ENCODE measurements at regions of chr4 and their contacts with region 1.

Region 1: GRCh38 chr4:2441393-2442174 is 22.8 kb downstream of the CFAP99 start:
- DNase-seq: peak; percentile 88
- H3K4me3 ChIP-seq: no peak overlapping the region
- H3K27ac ChIP-seq: no peak overlapping the region
- H3K4me1 ChIP-seq: no peaks in the 10 kb centered on the region
- H3K27me3 ChIP-seq: no peaks in the 10 kb centered on the region
- CTCF ChIP-seq: peak; percentile 98

Region 2: DNA sequence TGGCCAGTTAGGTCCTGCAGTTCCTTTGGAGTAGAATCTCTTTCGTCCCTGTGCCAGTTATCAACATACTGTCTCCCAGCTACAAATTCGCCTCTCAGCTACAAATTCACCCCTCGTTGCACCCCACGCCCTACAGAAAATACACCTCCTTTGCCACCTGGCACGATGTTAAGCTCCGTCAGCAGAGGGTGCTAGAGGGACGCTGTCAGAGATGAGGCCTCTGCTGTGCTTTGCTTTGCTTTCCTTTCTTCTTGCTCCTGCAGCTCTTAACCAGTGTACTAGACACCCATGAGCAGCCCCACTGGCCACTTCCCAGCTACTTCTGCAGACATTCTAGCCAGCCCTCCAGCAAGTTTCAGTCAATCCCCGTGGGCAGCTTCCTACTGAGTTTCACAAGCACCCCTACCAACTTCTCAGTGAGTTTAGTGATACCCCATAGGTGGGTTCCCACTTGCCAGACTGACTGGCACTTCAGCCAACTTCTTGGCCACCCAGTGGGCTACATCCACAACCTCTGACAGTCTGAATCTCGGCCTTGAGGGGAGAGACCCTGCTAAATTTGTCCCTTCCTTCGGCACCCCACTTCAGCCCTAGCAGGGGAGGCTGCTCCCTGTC is 221.5 kb before region 1 on chr4:
- CTCF ChIA-PET with region 1: interaction called, 13 read pairs
- POLR2A ChIA-PET with region 1: no interaction called
- intact Hi-C with region 1: loop called (anchors 1 kb)
- DNase-seq: peak; percentile 75
- H3K4me3 ChIP-seq: no peak overlapping the region
- H3K27ac ChIP-seq: no peak overlapping the region
- H3K4me1 ChIP-seq: no peaks in the 10 kb centered on the region
- H3K27me3 ChIP-seq: no peaks in the 10 kb centered on the region
- CTCF ChIP-seq: peak; percentile 91

Region 3: GRCh38 chr4:2290974-2291704 is 150.4 kb before region 1 on chr4:
- CTCF ChIA-PET with region 1: no interaction called
- POLR2A ChIA-PET with region 1: interaction called, 11 read pairs
- intact Hi-C with region 1: no loop called
- DNase-seq: no peak
- H3K4me3 ChIP-seq: no peak overlapping the region
- H3K27ac ChIP-seq: no peak overlapping the region
- H3K4me1 ChIP-seq: peaks cover 9% of the 10 kb centered on the region
- H3K27me3 ChIP-seq: no peaks in the 10 kb centered on the region
- CTCF ChIP-seq: no peak